ENCODE measurements at regions of chr13 and their contacts with region 1.

Region 1: GRCh38 chr13:27171827-27172494 is 350 bp upstream of the USP12 start:
- DNase-seq: peak; percentile 96
- ATAC-seq: peak; percentile 99

Region 2: DNA sequence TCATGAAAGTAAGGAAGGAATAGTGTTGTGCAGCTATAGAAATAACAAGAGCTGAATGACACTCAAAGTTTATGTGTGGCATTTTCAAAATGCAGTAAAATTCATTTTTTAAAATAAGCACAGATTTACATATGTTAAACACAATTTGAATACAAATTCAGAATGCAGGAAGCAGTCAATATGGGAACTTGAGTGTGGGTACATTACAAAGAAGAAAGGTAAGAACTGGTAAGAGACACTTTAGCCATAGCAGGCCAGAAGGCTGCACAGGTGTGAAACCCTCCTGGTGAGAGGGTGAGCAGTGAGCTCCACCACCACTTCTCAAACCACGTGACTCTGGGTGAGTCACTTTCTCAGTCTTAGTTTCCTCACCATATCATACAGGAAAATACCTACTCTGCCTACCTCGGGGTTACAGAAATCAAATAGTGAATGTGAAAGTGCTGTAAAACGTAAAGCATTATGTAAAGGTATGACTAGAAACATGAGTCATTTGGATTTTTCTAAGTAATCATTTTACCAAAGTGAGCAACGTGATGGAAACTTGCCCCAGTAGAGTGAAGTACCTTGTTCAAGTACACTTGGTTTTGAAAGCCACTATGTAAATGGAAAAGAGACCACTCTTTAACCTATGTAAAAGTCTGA is 40.9 kb before region 1 on chr13:
- intact Hi-C with region 1: loop called (anchors 5 kb)
- DNase-seq: no peak
- ATAC-seq: no peak

Region 3: DNA sequence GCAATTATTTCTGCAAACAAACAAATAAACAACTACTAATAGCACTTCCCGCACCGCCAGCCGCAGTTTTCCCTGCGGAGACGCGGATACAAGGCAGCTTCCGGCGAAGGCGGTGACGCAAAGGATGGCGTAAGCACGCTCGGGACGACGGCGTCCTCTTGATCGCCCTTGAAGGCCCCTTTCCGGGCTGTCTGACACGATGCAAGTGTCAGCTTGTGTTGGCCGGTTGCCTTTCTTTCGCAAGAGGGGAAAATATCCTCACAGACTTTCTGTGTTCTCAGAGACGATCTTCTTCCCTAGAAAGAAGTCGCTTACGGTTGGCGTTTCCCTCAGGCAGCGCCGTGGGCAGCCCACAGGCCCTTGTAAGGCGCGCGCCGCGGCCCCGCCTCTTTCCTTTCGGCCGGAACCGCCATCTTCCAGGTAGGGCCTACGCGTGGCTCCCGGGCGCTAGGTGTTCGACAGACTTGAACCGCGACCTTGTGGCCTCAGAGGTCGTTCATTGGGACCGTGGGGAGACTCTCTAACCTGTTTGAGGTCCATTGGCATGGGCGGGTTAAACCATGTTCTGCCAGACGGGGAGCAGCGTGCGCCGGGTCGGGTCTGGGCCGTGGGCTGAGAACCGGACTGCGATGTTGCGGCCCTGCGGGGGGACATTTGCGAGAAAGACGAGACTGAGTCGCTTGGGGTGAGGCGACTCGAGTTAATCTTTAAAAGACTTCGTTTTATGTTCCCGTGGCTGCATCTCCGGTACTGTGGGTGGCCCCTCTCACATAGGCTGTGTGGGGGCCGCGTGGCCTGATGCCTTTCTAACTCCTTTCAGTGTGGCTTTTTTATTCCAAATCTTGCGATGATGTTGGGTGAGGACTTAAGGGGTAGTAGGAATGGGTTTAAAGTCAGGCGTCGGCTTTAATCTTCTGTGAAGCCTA is 79.5 kb after region 1 on chr13 and contains the start of gene RPL21:
- intact Hi-C with region 1: loop called (anchors 1 kb)
- DNase-seq: peak; percentile 98
- ATAC-seq: peak; percentile 99
- total RNA-seq, gene RPL21: 782 TPM